SK-N-SH (cell line): ENCODE measurements at regions of chr3 and their contacts with region 1.

Region 1: DNA sequence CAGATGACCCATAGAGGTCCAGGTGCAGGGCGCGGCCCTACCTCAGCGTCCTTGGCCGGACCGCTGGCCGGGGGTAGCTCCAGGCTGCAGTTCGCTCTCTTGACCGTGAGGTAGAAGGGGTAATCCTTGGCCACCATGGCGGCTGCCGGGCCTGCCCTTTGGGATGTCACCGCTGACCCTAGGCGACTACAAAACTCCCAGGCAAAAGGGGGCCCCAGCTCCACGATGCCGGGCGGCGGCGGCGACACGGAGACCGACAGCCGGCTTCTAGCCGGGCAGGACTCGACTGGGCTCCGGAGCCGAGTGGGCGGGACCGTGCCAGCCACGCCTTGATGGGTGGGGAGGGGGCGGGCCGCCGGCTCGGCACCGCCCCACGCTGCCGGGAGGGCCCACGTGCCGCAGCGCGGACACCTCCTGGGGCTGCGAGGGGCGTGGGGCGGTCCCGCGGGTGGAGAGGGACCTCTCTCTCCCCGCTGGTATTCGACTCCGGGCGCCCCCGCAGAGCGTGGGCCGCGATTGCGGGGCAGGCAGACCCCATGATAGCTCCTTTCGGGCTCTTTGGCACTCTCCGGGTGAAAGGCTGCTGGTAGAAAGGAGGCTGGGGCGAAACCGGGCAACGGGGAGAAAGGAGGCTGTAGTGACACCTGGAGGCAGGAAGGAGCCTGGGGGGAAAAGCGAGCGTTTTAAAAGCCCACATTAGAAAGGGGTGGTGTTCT is at the start of gene ARHGEF3:
- DNase-seq: peak; percentile 96
- H3K4me3 ChIP-seq: peak within 1 kb of the TSS; percentile 73 to 75
- H3K27ac ChIP-seq: peak within 1 kb of the TSS in 1 of 2 experiments; percentile 25; a peak in 1 of 4 replicates
- H3K4me1 ChIP-seq: peaks cover 8 to 28% of the 10 kb centered on the region in 2 experiments; a peak in 2 of 4 replicates
- H3K27me3 ChIP-seq: no peaks in the 10 kb centered on the region
- CTCF ChIP-seq: peak; percentile 62
- EP300 ChIP-seq: no peak
- RAD21 ChIP-seq: peak; percentile 30; the same call in 1 of the 2 replicates
- polyA plus RNA-seq, gene ARHGEF3: 5.7 and 5.9 TPM in 2 replicates

Region 2: DNA sequence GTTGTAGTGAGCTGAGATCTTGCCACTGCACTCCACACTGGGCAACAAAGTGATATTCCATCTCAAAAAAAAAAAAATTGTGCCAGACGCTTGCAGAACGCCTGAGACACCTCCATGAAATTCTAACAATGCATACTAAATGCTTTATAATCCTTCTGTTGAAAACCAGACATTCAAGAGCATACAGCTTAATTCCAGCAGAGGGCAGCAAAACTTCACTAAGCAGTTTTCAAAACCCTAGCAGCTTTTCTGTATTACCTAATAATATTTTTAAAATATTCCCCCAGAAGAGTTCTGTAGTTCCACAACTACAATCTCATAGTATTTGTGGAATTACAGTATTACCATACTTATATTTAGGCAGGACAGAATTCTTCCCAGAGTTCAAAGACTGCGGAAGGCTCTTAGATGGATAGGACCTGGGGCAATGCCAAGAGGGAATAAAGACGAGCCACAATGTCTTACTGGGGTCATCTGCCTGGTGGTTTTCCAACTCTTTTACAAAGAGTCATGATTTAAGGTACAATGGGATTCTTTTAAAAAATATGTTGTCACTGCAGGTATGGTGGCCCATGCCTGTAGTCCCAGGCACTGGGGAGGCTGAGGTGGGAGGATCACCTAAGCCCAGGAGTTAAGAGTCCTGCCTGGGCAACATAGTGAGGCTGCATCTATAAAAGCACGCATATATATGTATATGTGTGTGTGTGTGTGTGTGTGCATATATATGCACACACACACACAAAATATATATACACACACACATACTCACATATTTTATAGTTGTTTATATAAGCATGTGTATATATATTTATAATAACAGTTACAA is 99.1 kb before region 1 on chr3:
- CTCF ChIA-PET with region 1: interaction called, 125 read pairs
- POLR2A ChIA-PET with region 1: no interaction called
- DNase-seq: peak; percentile 57
- H3K4me3 ChIP-seq: peak overlapping the region in 1 of 2 experiments; percentile 21; a peak in 1 of 4 replicates
- H3K27ac ChIP-seq: no peak overlapping the region
- H3K4me1 ChIP-seq: no peaks in the 10 kb centered on the region
- H3K27me3 ChIP-seq: no peaks in the 10 kb centered on the region
- CTCF ChIP-seq: peak; percentile 95
- EP300 ChIP-seq: no peak
- RAD21 ChIP-seq: peak; percentile 96

Region 3: DNA sequence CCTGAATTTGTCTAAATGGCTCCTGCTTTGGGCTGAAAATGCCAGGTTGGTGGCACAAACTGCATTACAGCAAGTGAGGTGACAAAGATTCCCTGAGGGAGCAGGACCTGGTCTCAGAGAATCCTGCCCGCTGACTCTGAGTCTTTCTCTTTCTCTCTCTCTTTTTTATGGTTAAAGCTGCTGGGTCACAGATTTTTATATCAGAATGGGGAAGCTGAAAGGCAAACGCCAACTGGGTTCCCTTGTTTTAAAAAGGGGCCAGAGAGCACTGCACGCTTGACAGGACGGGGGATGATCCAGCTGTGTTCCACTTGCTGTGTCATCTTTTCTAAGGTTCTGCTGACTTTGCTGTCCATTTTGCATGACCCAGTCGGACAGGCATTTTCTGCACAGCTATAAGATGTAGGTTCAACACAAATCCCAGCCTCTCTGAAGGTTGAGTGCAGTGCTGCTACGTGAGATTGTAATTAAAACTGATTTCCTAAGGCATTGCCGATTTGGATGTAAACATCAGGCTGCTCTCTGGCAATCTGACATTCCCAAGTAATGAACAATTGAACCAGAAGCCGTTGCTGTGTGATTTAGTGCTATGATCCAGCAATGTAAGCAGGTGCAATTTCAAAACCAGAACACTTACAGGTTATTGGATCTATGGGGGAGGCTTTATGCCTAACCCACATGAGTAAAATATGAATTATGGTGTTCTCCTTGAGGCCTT is 25.8 kb before region 1 on chr3:
- CTCF ChIA-PET with region 1: interaction called, 12 read pairs
- POLR2A ChIA-PET with region 1: no interaction called
- DNase-seq: no peak
- H3K4me3 ChIP-seq: no peak overlapping the region
- H3K27ac ChIP-seq: peak overlapping the region in 1 of 2 experiments; percentile 51; a peak in 2 of 4 replicates
- H3K4me1 ChIP-seq: peaks cover 0 to 27% of the 10 kb centered on the region in 2 experiments; a peak in 2 of 4 replicates
- H3K27me3 ChIP-seq: no peaks in the 10 kb centered on the region
- CTCF ChIP-seq: no peak
- EP300 ChIP-seq: no peak
- RAD21 ChIP-seq: no peak

Region 4: DNA sequence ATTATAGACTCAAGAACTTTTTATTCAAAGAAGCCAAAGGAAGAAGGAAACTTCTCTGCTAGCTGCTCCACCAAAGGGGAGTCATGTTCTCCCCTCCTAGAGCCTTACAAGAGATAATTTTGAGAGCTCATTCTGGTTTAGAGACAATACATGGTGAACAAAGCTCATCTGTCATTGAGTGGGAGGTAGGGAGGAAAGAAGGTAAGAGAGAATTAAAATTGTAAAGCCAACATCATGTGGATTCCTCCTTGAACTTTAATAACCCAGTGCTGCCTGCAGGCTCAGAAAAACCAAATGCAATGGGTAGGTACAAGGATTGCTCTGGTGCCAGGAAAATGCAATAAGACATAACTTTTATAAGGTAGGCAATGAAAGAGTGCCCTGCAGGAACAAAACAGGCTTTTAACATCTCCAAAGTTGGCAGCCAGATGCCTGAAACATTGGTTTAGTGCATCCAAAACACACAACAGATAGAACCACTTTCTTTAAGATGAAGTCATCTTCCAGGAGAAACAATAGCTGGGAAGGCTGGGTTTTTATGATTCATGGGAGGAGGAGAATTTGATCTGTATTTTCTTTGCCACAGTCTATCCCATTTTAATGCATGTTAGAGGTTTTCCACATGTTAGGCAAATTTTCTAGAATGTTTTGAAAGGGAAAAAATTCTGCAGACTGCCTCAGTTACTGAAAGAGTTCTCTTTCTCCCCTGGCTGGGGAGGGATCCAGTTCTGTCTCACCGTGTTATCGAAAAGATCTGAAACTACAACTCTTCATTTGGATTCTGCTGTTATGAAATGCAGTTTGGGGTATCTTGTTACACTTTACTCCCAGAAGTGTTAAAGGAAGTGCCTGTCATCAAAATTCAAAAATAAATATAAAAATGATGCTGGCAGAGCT is 11.2 kb after region 1 on chr3:
- CTCF ChIA-PET with region 1: interaction called, 26 read pairs
- POLR2A ChIA-PET with region 1: interaction called, 5 read pairs
- DNase-seq: no peak
- H3K4me3 ChIP-seq: no peak overlapping the region
- H3K27ac ChIP-seq: peak overlapping the region in 1 of 2 experiments; percentile 23; a peak in 2 of 4 replicates
- H3K4me1 ChIP-seq: peaks cover 11% of the 10 kb centered on the region in 2 experiments; a peak in 3 of 4 replicates
- H3K27me3 ChIP-seq: no peaks in the 10 kb centered on the region
- CTCF ChIP-seq: no peak
- EP300 ChIP-seq: no peak
- RAD21 ChIP-seq: no peak

Region 5: DNA sequence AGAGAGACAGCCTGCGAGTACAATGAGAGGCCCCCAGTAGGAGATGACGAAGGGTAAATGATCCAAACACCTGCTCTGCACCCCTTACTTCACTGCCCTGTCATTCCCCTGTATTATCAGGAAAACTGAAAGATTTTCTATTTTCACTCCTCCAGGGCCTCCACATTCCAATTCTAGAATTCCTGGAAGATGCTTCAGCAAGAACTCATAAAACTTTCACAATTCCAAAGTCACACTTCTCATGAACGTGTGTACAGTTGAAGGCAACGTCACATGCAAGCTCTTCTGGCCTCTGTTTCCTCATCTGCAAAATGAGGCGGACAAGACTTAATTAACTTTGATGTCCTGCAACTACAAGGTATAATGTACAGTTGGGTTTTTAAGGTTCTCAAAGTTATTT is 195.9 kb after region 1 on chr3:
- CTCF ChIA-PET with region 1: interaction called, 195 read pairs
- POLR2A ChIA-PET with region 1: no interaction called
- DNase-seq: no peak
- H3K4me3 ChIP-seq: no peak overlapping the region
- H3K27ac ChIP-seq: no peak overlapping the region
- H3K4me1 ChIP-seq: no peaks in the 10 kb centered on the region
- H3K27me3 ChIP-seq: no peaks in the 10 kb centered on the region
- CTCF ChIP-seq: no peak
- EP300 ChIP-seq: no peak
- RAD21 ChIP-seq: no peak